ENCODE measurements at regions of chr5 and their contacts with region 1.

Region 1: GRCh38 chr5:140557136-140557805 is at the start of gene SRA1:
- DNase-seq: peak; percentile 90
- H3K4me3 Mint-ChIP-seq: peak within 1 kb of the TSS; percentile 88
- H3K27ac Mint-ChIP-seq: peak within 1 kb of the TSS; percentile 89
- H3K4me1 Mint-ChIP-seq: peaks cover 47% of the 10 kb centered on the region
- H3K27me3 Mint-ChIP-seq: no peaks in the 10 kb centered on the region
- total RNA-seq, gene SRA1: 55.6 and 59.2 TPM in 2 replicates

Region 2: GRCh38 chr5:140502834-140503233 is 54.4 kb before region 1 on chr5:
- intact Hi-C with region 1: no loop called
- DNase-seq: no peak
- H3K4me3 Mint-ChIP-seq: no peak overlapping the region
- H3K27ac Mint-ChIP-seq: no peak overlapping the region
- H3K4me1 Mint-ChIP-seq: peaks cover 6% of the 10 kb centered on the region
- H3K27me3 Mint-ChIP-seq: no peaks in the 10 kb centered on the region

Region 3: GRCh38 chr5:140700177-140701144 is 143.2 kb after region 1 on chr5 and contains the start of gene ZMAT2:
- intact Hi-C with region 1: loop called (anchors 2 kb)
- DNase-seq: peak; percentile 92
- H3K4me3 Mint-ChIP-seq: peak within 1 kb of the TSS; percentile 96
- H3K27ac Mint-ChIP-seq: peak within 1 kb of the TSS; percentile 88
- H3K4me1 Mint-ChIP-seq: peaks cover 22% of the 10 kb centered on the region
- H3K27me3 Mint-ChIP-seq: no peaks in the 10 kb centered on the region
- total RNA-seq, gene ZMAT2: 68.0 and 71.2 TPM in 2 replicates